ENCODE measurements at regions of chr18 and their contacts with region 1.

Region 1: DNA sequence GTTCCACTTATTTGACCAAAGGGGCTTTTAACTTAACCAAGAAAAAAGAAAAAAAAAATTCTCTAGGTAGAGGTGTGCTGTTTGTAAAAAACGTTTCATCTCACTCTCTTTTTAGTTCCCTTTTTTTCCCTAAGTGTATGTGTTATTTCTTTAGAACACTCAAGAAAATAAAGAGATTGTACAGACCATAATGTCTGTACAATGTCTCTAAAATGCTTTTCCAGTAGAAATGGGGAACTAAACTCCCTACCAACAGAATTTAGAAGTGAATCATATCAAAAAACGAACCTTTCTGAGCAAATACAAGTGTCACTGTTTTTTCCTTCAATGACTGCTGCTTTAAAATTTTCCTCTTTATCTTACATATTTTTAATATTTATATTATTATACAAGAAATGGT is 72.0 kb downstream of the CDH7 start:
- DNase-seq: no peak
- ATAC-seq: no peak
- H3K4me3 ChIP-seq: no peak overlapping the region
- H3K27ac ChIP-seq: no peak overlapping the region
- H3K4me1 ChIP-seq: peaks cover 10% of the 10 kb centered on the region
- H3K27me3 ChIP-seq: no peaks in the 10 kb centered on the region
- CTCF ChIP-seq: no peak

Region 2: GRCh38 chr18:65906621-65907034 is 83.8 kb after region 1 on chr18:
- CTCF ChIA-PET with region 1: no interaction called
- POLR2A ChIA-PET with region 1: no interaction called
- intact Hi-C with region 1: loop called (anchors 2 kb)
- DNase-seq: peak; percentile 83
- ATAC-seq: peak; percentile 90
- H3K4me3 ChIP-seq: no peak overlapping the region
- H3K27ac ChIP-seq: peak overlapping the region; percentile 82
- H3K4me1 ChIP-seq: peaks cover 22% of the 10 kb centered on the region
- H3K27me3 ChIP-seq: no peaks in the 10 kb centered on the region
- CTCF ChIP-seq: no peak

Measured in PC-3 (cell line).